CD14-positive monocyte (primary cell): ENCODE measurements at regions of chr16 and their contacts with region 1.

Region 1: GRCh38 chr16:61263400-61263799 is 772.8 kb downstream of the CDH8 start:
- DNase-seq: no peak
- H3K4me3 ChIP-seq: no peak overlapping the region
- H3K4me3 Mint-ChIP-seq: no peak overlapping the region
- H3K27ac ChIP-seq: no peak overlapping the region
- H3K27ac Mint-ChIP-seq: no peak overlapping the region
- H3K4me1 ChIP-seq: no peaks in the 10 kb centered on the region
- H3K4me1 Mint-ChIP-seq: no peaks in the 10 kb centered on the region
- H3K27me3 ChIP-seq: no peaks in the 10 kb centered on the region
- H3K27me3 Mint-ChIP-seq: peaks cover 0 to 2% (median 0%) of the 10 kb centered on the region in 3 donors
- CTCF ChIP-seq: no peak

Region 2: DNA sequence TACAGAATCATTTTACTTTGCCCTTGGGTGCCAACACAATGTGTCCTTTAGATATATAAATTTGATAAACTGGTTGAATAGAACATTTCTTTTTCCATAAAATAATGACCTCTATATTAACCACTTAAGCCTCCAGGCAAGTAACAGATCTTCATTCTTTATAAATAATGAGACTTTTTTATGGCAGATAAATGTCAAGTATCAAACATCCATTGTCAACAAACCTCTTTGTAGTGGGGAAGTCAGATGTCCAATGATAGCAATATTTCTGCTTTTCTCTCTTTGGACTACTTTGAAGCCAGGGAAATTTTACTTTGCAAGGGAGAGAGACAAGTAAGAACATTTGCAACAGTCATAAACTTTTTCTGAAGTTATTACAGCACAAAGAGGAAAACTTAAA is 68.4 kb before region 1 on chr16:
- intact Hi-C with region 1: no loop called
- DNase-seq: no peak
- H3K4me3 ChIP-seq: no peak overlapping the region
- H3K4me3 Mint-ChIP-seq: no peak overlapping the region
- H3K27ac ChIP-seq: no peak overlapping the region
- H3K27ac Mint-ChIP-seq: no peak overlapping the region
- H3K4me1 ChIP-seq: no peaks in the 10 kb centered on the region
- H3K4me1 Mint-ChIP-seq: no peaks in the 10 kb centered on the region
- H3K27me3 ChIP-seq: no peaks in the 10 kb centered on the region
- H3K27me3 Mint-ChIP-seq: no peaks in the 10 kb centered on the region
- CTCF ChIP-seq: no peak

Region 3: DNA sequence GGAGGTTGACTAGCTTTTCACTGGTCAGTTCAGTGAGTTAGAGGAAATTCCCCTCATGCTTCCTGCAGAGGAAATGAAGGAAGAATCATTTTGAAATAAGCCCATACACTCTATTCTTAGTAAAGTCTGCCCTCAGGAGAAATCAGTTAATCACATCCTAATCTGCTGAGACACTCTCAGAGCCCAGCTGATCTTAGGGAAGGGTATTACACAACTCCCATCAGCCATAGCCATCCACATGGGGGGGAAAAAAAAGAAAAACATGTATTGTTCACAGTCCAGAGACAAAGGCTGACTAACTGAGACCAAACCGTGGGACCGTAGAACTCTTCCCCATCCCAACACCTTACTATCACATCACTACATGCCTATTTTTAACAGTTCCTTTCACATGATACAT is 50.5 kb after region 1 on chr16:
- intact Hi-C with region 1: loop called in 1 of 2 experiments (anchors 10 kb)
- DNase-seq: no peak
- H3K4me3 ChIP-seq: no peak overlapping the region
- H3K4me3 Mint-ChIP-seq: no peak overlapping the region
- H3K27ac ChIP-seq: no peak overlapping the region
- H3K27ac Mint-ChIP-seq: no peak overlapping the region
- H3K4me1 ChIP-seq: no peaks in the 10 kb centered on the region
- H3K4me1 Mint-ChIP-seq: no peaks in the 10 kb centered on the region
- H3K27me3 ChIP-seq: no peaks in the 10 kb centered on the region
- H3K27me3 Mint-ChIP-seq: peaks cover 0 to 1% (median 0%) of the 10 kb centered on the region in 3 donors
- CTCF ChIP-seq: no peak